CD4-positive, alpha-beta memory T cell (primary cell): ENCODE measurements at regions of chr12 and their contacts with region 1.

Region 1: DNA sequence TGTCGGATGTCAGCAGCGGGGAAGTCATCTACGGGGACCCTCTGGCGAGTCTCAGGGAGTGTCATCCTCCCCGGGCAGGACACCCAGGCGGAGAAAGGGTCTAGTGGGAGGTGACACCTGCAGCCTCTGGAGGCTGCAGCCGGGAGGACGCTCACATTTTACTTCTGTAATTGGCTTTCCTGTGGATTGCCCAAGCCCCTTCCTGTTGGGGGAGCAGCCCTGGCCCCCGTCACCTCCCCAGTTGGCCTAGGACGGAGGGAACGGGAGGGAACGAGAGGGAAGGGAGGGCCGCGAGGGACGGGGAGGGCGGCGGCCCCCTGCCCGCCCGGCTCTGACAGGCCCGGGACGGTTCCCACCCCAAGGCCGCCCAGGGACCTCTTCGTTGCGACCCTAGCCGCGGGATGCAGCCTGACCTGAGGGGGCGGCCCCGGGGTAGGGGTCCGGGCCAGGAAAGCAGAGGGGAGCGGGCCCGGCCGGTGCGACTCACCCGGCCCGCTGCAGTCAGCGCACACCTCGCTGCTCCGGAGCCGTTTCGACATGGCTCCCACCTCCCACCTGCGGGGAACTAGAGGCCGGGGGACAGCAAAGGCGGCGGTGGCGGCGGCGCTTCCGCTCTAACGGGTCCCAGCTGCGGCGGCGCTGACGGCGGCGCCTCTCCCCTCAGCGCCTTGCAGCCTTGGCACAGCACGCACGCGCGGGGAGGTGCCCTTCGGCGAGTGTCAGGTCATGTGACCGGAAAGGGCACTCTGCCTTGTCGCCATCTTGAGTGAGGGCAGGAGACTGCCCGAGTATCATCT is at the start of gene GIT2:
- DNase-seq: peak; percentile 93 to 95 (median 95)
- H3K4me3 ChIP-seq: peak within 1 kb of the TSS; percentile 62 to 87
- H3K4me3 Mint-ChIP-seq: peak within 1 kb of the TSS; percentile 87 to 98 (median 94)
- H3K27ac ChIP-seq: peak within 1 kb of the TSS; percentile 93
- H3K27ac Mint-ChIP-seq: peak within 1 kb of the TSS; percentile 92 to 98 (median 96)
- H3K4me1 ChIP-seq: peaks cover 57% of the 10 kb centered on the region
- H3K4me1 Mint-ChIP-seq: peaks cover 36 to 82% (median 57%) of the 10 kb centered on the region in 4 donors
- H3K27me3 ChIP-seq: no peaks in the 10 kb centered on the region
- H3K27me3 Mint-ChIP-seq: no peaks in the 10 kb centered on the region
- total RNA-seq, gene GIT2: 133 to 149 TPM

Region 2: DNA sequence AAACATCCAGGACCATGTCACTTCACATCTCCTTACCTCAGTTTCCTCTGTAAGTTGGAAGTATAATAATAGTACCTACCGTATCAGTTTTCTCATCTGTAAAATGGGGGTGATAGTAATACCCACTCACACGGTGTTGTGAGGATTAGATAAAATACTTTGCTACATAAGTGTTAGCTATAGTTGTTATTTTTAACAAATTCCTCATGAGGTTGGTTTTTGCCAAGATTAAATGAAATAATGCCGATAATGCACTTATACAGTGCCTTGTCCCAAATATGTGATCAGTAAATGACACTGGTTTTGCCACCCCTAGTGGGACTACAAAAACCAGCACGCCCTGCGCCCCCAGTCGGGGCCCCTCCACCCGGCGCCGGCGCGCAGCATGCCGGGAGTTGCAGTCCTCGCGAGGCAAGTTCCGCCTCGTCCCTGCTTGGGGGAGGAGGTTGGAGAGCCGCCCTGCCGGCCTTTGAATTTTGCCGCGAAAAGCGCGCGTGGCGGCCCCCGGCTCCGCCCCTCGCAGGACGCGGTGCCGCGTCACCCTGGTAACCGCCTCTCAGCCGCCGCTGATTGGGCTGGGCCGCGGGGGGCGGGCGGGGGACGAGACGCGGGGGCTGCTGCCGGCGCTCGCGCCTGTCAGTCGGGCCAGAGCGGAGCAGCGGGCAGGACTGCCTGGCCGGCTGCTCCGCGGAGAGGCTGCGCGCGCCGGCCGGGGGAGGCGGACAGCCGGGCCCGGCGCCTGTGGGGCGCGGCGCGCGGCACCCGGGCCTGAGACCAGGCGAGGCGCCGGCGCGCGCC is 282.5 kb before region 1 on chr12 and contains the start of gene FAM222A:
- CTCF ChIA-PET with region 1: no interaction called
- POLR2A ChIA-PET with region 1: no interaction called
- intact Hi-C with region 1: loop called (anchors 2 kb)
- DNase-seq: peak; percentile 97 to 98 (median 98)
- H3K4me3 ChIP-seq: peak within 1 kb of the TSS in 1 of 2 donors; percentile 60
- H3K4me3 Mint-ChIP-seq: peak within 1 kb of the TSS; percentile 27 to 84 (median 72)
- H3K27ac ChIP-seq: peak within 1 kb of the TSS; percentile 30
- H3K27ac Mint-ChIP-seq: peak within 1 kb of the TSS in 4 of 7 donors; percentile 6 to 66 (median 43)
- H3K4me1 ChIP-seq: peaks cover 12% of the 10 kb centered on the region
- H3K4me1 Mint-ChIP-seq: peaks cover 0 to 6% (median 1%) of the 10 kb centered on the region in 4 donors
- H3K27me3 ChIP-seq: peaks cover 18% of the 10 kb centered on the region
- H3K27me3 Mint-ChIP-seq: peaks cover 13 to 18% of the 10 kb centered on the region in 2 donors
- total RNA-seq, gene FAM222A: 0.55 to 0.69 TPM

Region 3: DNA sequence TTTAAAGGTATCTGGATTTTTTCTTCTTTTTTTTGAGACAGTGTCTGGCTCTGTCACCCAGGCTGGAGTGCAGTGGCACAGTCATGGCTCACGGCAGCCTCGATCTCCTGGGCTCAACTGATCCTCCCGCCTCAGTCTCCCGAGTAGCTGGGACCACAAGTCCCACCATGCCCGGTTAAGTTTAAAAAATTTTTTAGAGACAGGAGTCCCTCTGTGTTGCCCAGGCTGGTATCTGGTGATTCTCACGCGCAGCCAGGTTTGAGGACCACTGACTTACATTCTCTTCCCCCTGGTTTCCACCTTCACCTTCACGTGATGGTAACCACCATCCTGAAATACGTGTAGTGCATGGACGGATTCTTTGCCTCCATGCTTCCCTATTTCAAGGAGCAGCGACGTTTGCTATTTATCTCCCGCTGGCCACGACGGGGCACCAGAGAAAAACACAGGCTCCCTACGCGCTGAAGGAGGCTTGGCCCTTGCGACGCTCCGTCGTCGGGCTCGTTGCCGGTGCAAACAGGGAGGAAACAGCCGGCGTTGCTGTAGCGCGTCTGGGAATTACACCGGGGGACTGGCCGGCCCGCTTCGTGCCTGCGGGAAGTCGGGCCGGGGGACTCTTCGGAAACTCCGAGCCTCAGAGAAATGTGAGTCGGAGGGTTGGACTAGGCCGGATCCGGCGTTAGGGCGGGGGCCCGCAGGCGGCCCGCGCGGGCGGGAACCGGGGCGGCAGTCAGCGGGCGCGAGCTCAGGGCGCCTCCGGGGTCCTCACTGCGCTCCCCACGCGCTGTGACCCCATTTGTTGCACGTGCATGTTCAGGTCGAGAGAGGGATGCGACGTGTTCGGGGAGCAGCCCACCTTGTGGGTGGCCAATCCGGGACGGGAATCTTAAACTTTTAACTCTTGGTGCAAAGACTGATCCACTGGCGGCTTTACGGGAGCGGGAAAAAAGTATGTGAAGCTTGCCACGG is 95.8 kb before region 1 on chr12 and contains the start of gene TCHP:
- CTCF ChIA-PET with region 1: no interaction called
- POLR2A ChIA-PET with region 1: interaction called, 7 read pairs
- intact Hi-C with region 1: loop called (anchors 1 kb)
- DNase-seq: peak; percentile 76 to 83 (median 80)
- H3K4me3 ChIP-seq: peak within 1 kb of the TSS; percentile 72 to 87
- H3K4me3 Mint-ChIP-seq: peak within 1 kb of the TSS; percentile 90 to 99 (median 94)
- H3K27ac ChIP-seq: peak within 1 kb of the TSS; percentile 70
- H3K27ac Mint-ChIP-seq: peak within 1 kb of the TSS; percentile 85 to 99 (median 97)
- H3K4me1 ChIP-seq: peaks cover 22% of the 10 kb centered on the region
- H3K4me1 Mint-ChIP-seq: peaks cover 14 to 37% (median 23%) of the 10 kb centered on the region in 4 donors
- H3K27me3 ChIP-seq: no peaks in the 10 kb centered on the region
- H3K27me3 Mint-ChIP-seq: no peaks in the 10 kb centered on the region
- total RNA-seq, gene TCHP: 41.4 to 45.0 TPM

Region 4: DNA sequence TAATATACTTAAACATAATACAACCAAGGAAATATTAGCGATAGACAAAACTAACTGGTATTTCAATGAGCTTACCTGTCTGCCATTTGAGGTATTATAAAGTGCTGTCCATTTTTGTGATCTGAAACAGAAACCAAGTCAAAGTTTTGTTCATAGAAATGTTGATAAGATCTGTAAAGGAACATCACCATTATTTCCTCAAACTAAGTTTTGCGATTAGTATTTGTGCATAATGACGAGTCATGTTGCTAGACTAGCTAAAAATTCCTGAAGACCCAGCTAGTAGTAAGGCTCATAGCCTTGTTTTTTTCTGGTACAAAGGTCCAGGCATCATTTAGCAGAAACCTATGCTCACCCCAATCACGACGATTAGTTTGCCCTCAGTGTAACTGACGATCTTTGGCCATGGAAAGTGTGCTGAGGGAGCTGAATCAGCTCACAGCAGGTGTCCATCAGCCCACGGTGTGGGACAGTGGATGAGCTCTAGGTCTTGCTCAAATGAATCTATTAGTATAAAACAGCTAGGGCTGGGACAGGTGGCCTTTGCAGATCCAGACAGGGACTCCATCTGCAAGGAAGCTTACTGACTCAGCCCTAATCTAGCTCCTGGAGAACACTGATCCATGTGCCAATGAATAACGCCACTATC is 28.4 kb before region 1 on chr12:
- CTCF ChIA-PET with region 1: interaction called, 3 read pairs
- POLR2A ChIA-PET with region 1: interaction called, 21 read pairs
- intact Hi-C with region 1: no loop called
- DNase-seq: peak; percentile 6 to 44 (median 14)
- H3K4me3 ChIP-seq: peak overlapping the region; percentile 20 to 49
- H3K4me3 Mint-ChIP-seq: peak overlapping the region; percentile 71 to 84 (median 77)
- H3K27ac ChIP-seq: peak overlapping the region; percentile 65
- H3K27ac Mint-ChIP-seq: peak overlapping the region; percentile 88 to 96 (median 92)
- H3K4me1 ChIP-seq: peaks cover 28% of the 10 kb centered on the region
- H3K4me1 Mint-ChIP-seq: peaks cover 15 to 45% (median 28%) of the 10 kb centered on the region in 4 donors
- H3K27me3 ChIP-seq: no peaks in the 10 kb centered on the region
- H3K27me3 Mint-ChIP-seq: no peaks in the 10 kb centered on the region

Region 5: GRCh38 chr12:110012137-110012536 is 16.3 kb after region 1 on chr12:
- CTCF ChIA-PET with region 1: interaction called, 5 read pairs
- POLR2A ChIA-PET with region 1: interaction called, 19 read pairs
- intact Hi-C with region 1: loop called (anchors 2 kb)
- DNase-seq: peak in 4 of 5 donors; percentile 35 to 81 (median 44)
- H3K4me3 ChIP-seq: no peak overlapping the region
- H3K4me3 Mint-ChIP-seq: peak overlapping the region; percentile 2 to 89 (median 72)
- H3K27ac ChIP-seq: peak overlapping the region; percentile 43
- H3K27ac Mint-ChIP-seq: peak overlapping the region; percentile 79 to 97 (median 94)
- H3K4me1 ChIP-seq: peaks cover 68% of the 10 kb centered on the region
- H3K4me1 Mint-ChIP-seq: peaks cover 44 to 69% (median 56%) of the 10 kb centered on the region in 4 donors
- H3K27me3 ChIP-seq: no peaks in the 10 kb centered on the region
- H3K27me3 Mint-ChIP-seq: no peaks in the 10 kb centered on the region

Region 6: DNA sequence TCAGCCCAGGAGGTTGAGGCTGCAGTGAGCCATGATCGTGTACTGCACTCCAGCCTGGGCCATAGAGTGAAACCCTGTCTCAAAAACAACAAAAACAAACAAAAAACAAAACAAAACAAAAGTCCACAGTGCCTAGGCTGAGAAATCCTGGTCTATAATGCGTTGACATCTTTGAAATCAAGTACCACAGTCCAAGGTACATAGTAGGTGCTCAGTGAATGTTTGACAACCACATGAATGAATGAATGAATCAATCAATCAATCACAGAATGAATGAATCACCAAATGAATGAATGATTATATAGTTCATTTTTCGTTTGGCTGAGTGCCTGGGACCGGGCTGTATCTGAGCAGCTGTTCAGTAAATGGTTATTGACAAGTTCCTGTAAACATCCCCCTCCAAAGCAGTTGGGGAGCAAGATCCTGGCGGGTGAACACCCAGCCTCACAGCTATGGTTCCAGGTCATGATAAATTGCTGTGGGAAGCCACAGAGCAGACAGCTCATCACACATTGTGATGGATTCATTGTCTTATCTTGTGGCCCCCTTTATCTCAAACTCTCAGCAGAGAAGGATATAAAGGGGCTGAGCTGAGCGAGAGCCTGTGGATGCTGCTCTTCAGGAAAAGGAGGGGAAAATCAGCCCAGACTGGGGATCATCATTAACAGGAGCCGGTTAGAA is 97.9 kb after region 1 on chr12:
- CTCF ChIA-PET with region 1: no interaction called
- POLR2A ChIA-PET with region 1: no interaction called
- intact Hi-C with region 1: no loop called
- DNase-seq: no peak
- H3K4me3 ChIP-seq: no peak overlapping the region
- H3K4me3 Mint-ChIP-seq: no peak overlapping the region
- H3K27ac ChIP-seq: no peak overlapping the region
- H3K27ac Mint-ChIP-seq: no peak overlapping the region
- H3K4me1 ChIP-seq: no peaks in the 10 kb centered on the region
- H3K4me1 Mint-ChIP-seq: peaks cover 0 to 2% (median 0%) of the 10 kb centered on the region in 4 donors
- H3K27me3 ChIP-seq: no peaks in the 10 kb centered on the region
- H3K27me3 Mint-ChIP-seq: peaks cover 3 to 16% of the 10 kb centered on the region in 2 donors

Region 7: GRCh38 chr12:110888256-110888991 is 892.5 kb after region 1 on chr12:
- CTCF ChIA-PET with region 1: no interaction called
- POLR2A ChIA-PET with region 1: no interaction called
- intact Hi-C with region 1: loop called (anchors 5 kb)
- DNase-seq: no peak
- H3K4me3 ChIP-seq: peak overlapping the region in 1 of 2 donors; percentile 86
- H3K4me3 Mint-ChIP-seq: peak overlapping the region in 6 of 8 donors; percentile 94 to 96 (median 94)
- H3K27ac ChIP-seq: no peak overlapping the region
- H3K27ac Mint-ChIP-seq: peak overlapping the region in 4 of 7 donors; percentile 29 to 92 (median 81)
- H3K4me1 ChIP-seq: peaks cover 3% of the 10 kb centered on the region
- H3K4me1 Mint-ChIP-seq: peaks cover 3 to 8% (median 4%) of the 10 kb centered on the region in 4 donors
- H3K27me3 ChIP-seq: peaks cover 4% of the 10 kb centered on the region
- H3K27me3 Mint-ChIP-seq: peaks cover 2 to 4% of the 10 kb centered on the region in 2 donors